Activated CD8-positive, alpha-beta T cell treated with anti-CD3 and anti-CD28 coated beads for 36 hours (primary cell): ENCODE measurements at regions of chr19 and their contacts with region 1.

Region 1: GRCh38 chr19:2750808-2751443 is 11.1 kb upstream of the SLC39A3 start:
- DNase-seq: no peak
- ATAC-seq: no peak
- H3K4me3 Mint-ChIP-seq: no peak overlapping the region
- H3K27ac Mint-ChIP-seq: no peak overlapping the region
- H3K4me1 Mint-ChIP-seq: peaks cover 13% of the 10 kb centered on the region
- H3K27me3 Mint-ChIP-seq: peaks cover 2% of the 10 kb centered on the region
- CTCF ChIP-seq: no peak

Region 2: GRCh38 chr19:2661615-2662014 is 89.3 kb before region 1 on chr19:
- CTCF ChIA-PET with region 1: interaction called, 13 read pairs
- POLR2A ChIA-PET with region 1: no interaction called
- intact Hi-C with region 1: no loop called
- DNase-seq: peak; percentile 60
- ATAC-seq: no peak
- H3K4me3 Mint-ChIP-seq: no peak overlapping the region
- H3K27ac Mint-ChIP-seq: no peak overlapping the region
- H3K4me1 Mint-ChIP-seq: no peaks in the 10 kb centered on the region
- H3K27me3 Mint-ChIP-seq: no peaks in the 10 kb centered on the region
- CTCF ChIP-seq: no peak

Region 3: DNA sequence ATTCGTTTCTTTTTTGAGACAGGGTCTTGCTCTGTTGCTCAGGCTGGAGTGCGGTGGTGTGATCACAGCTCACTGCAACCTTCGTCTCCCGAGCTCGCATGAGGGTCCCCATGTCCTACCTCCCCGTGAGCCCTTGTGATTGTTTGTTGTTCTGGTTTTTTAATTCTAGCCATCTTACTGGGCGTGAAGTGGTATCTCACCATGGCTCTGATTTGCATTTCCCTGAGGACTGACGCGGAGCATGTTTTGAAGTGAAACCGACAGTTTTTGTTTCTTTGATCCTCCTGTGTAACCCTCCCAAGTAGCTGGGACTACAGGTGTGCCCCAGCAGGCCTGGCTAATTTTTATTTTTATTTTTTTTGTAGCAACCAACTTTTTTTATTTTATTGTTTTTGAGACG is 70.1 kb before region 1 on chr19:
- CTCF ChIA-PET with region 1: no interaction called
- POLR2A ChIA-PET with region 1: no interaction called
- intact Hi-C with region 1: no loop called
- DNase-seq: no peak
- ATAC-seq: no peak
- H3K4me3 Mint-ChIP-seq: no peak overlapping the region
- H3K27ac Mint-ChIP-seq: no peak overlapping the region
- H3K4me1 Mint-ChIP-seq: no peaks in the 10 kb centered on the region
- H3K27me3 Mint-ChIP-seq: no peaks in the 10 kb centered on the region
- CTCF ChIP-seq: no peak

Region 4: DNA sequence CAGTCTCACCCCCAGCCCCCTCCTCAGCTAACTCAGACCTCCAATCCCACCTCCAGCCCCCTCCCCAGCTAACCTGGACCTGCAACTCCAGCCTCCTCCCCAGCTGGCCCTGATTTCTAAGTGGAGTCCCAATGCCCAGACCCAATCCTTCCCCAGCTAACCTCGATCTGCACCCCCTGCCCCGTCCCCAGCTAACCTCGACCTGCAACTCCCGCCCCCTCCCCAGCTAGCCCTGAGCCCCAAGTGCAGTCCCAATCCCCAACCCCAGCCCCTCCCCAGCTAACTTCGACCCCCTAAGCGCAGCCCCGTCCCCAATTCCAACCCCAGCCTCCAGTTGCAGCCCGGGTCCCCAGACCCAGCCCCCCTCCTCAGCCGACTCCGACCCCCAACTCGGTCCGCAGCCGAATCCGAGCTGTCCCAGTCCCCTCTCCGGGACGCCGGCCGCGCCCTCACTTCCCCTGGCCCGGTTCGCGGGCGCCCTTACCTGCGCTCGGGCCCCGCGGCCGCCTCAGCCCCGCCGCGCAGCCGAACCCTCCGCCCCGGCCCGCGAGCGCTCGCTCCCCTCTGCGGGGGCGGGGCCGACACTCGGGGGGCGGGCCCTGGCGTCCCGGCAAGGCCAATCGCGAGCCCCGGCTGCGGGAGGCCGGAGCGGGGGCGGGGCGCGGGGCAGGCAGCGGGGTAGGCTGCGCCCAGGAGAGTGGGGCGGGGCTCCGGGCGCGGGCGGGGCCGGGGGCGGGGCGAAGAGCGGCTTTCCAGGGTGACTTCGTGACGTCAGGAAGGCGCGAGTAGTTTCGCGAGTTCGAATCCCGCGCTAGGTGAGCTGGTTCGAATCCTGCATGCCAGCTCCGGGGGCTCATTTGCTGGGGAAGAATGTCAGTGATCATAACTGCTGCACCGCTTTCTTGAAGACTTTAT is 48.5 kb before region 1 on chr19 and contains the start of gene GNG7:
- CTCF ChIA-PET with region 1: interaction called, 13 read pairs
- POLR2A ChIA-PET with region 1: no interaction called
- intact Hi-C with region 1: no loop called
- DNase-seq: peak; percentile 95
- ATAC-seq: peak; percentile 100
- H3K4me3 Mint-ChIP-seq: peak within 1 kb of the TSS; percentile 56
- H3K27ac Mint-ChIP-seq: no peak within 1 kb of the TSS
- H3K4me1 Mint-ChIP-seq: peaks cover 17% of the 10 kb centered on the region
- H3K27me3 Mint-ChIP-seq: no peaks in the 10 kb centered on the region
- CTCF ChIP-seq: no peak
- total RNA-seq, gene GNG7: 0.27 to 0.32 TPM

Region 5: GRCh38 chr19:2739602-2740313 is 11.2 kb before region 1 on chr19 and contains the start of gene SLC39A3:
- CTCF ChIA-PET with region 1: interaction called, 12 read pairs
- POLR2A ChIA-PET with region 1: interaction called, 6 read pairs
- intact Hi-C with region 1: no loop called
- DNase-seq: peak; percentile 99
- ATAC-seq: peak; percentile 100
- H3K4me3 Mint-ChIP-seq: peak within 1 kb of the TSS; percentile 98
- H3K27ac Mint-ChIP-seq: peak within 1 kb of the TSS; percentile 82
- H3K4me1 Mint-ChIP-seq: peaks cover 21% of the 10 kb centered on the region
- H3K27me3 Mint-ChIP-seq: peaks cover 5% of the 10 kb centered on the region
- CTCF ChIP-seq: no peak
- total RNA-seq, gene SLC39A3: 35.5 to 38.1 TPM

Region 6: GRCh38 chr19:2775556-2776430 is 24.9 kb after region 1 on chr19:
- CTCF ChIA-PET with region 1: interaction called, 16 read pairs
- POLR2A ChIA-PET with region 1: no interaction called
- intact Hi-C with region 1: no loop called
- DNase-seq: peak; percentile 92
- ATAC-seq: peak; percentile 89
- H3K4me3 Mint-ChIP-seq: peak overlapping the region; percentile 52
- H3K27ac Mint-ChIP-seq: peak overlapping the region; percentile 93
- H3K4me1 Mint-ChIP-seq: peaks cover 40% of the 10 kb centered on the region
- H3K27me3 Mint-ChIP-seq: no peaks in the 10 kb centered on the region
- CTCF ChIP-seq: no peak